ENCODE measurements at regions of chr6 and their contacts with region 1.

Region 1: GRCh38 chr6:13702809-13703302 is 8.8 kb downstream of the RANBP9 start:
- DNase-seq: peak in 2 of 4 experiments; percentile 45 to 63
- ATAC-seq: peak; percentile 78
- H3K4me3 ChIP-seq: no peak overlapping the region
- H3K27ac ChIP-seq: peak overlapping the region; percentile 64
- H3K4me1 ChIP-seq: peaks cover 19 to 50% of the 10 kb centered on the region in 2 experiments; a peak in 4 of 5 replicates
- H3K27me3 ChIP-seq: no peaks in the 10 kb centered on the region
- CTCF ChIP-seq: no peak
- EP300 ChIP-seq: peak; percentile 52; the same call in 1 of the 2 replicates
- POLR2A ChIP-seq: no peak
- RAD21 ChIP-seq: 0 out of 4 replicates have a peak, but pooled peaks of 1 of the 2 experiments have one; percentile 2

Region 2: DNA sequence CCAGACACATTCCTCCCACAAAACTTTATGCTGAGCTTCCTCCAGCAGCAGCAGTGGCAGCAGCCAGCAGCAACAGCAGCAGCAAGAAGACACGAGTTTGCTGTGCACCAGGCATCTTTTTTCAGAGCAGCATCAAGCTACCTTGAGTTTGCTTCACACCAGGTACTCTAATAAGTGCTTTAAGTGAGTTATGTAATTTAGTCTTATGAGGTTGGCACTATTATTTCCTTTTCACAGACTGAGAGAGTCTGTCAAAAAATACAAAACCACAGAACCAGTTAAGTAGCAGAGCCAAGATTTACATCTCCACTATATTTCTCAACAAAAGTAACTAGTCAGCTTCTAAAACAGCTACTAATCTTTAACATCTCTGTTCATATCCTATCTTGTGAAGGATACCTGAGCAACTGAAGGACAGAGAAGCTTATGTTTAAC is 14.9 kb before region 1 on chr6:
- CTCF ChIA-PET with region 1: no interaction called
- POLR2A ChIA-PET with region 1: interaction called, 15 read pairs
- in situ Hi-C with region 1: no loop called
- intact Hi-C with region 1: no loop called
- DNase-seq: no peak
- ATAC-seq: peak; percentile 5; the same call in 1 of the 3 replicates
- H3K4me3 ChIP-seq: no peak overlapping the region
- H3K27ac ChIP-seq: peak overlapping the region; percentile 19; the same call in 1 of the 3 replicates
- H3K4me1 ChIP-seq: peaks cover 10 to 32% of the 10 kb centered on the region in 2 experiments; a peak in 4 of 5 replicates
- H3K27me3 ChIP-seq: no peaks in the 10 kb centered on the region
- CTCF ChIP-seq: no peak
- EP300 ChIP-seq: no peak
- POLR2A ChIP-seq: no peak
- RAD21 ChIP-seq: no peak

Region 3: DNA sequence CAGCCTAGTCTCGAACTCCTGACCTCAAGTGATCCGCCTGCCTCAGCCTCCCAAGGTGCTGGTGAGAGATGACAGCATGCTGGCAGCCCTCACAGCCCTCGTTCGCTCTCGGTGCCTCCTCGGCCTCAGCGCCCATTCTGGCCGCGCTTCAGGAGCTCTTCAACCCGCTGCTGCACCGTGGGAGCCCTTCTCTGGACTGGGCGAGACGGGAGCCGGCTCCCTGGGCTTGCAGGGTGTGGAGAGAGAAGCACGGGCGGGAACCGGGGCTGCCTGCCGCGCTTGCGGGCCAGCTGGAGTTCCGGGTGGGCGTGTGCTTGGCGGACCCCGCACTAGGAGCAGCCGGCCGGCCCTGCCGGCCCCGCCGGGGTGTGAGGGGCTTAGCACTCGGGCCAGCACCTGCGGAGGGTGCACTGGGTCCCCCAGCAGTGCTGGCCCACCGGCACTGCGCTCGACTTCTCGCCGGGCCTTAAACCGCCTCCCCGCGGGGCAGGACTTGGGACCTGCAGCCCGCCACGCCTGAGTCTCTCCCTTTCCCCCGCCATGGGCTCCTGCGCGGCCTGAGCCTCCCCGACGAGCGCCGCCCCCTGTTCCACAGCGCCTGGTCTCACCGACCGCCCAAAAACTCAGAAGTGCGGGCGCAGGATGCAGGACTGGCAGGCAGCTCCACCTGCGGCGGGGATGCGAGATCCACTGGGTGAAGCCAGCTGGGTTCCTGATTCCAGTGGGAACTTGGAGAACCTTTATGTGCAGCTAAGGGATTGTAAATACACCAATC is 40.3 kb after region 1 on chr6:
- CTCF ChIA-PET with region 1: no interaction called
- POLR2A ChIA-PET with region 1: no interaction called
- in situ Hi-C with region 1: no loop called
- intact Hi-C with region 1: no loop called
- DNase-seq: no peak
- ATAC-seq: no peak
- H3K4me3 ChIP-seq: no peak overlapping the region
- H3K27ac ChIP-seq: no peak overlapping the region
- H3K4me1 ChIP-seq: peaks cover 0 to 5% of the 10 kb centered on the region in 2 experiments; a peak in 1 of 5 replicates
- H3K27me3 ChIP-seq: no peaks in the 10 kb centered on the region
- CTCF ChIP-seq: no peak
- EP300 ChIP-seq: no peak
- POLR2A ChIP-seq: no peak
- RAD21 ChIP-seq: no peak

Region 4: GRCh38 chr6:13754644-13755043 is 51.8 kb after region 1 on chr6:
- CTCF ChIA-PET with region 1: no interaction called
- POLR2A ChIA-PET with region 1: no interaction called
- in situ Hi-C with region 1: no loop called
- intact Hi-C with region 1: no loop called
- DNase-seq: no peak
- ATAC-seq: no peak
- H3K4me3 ChIP-seq: no peak overlapping the region
- H3K27ac ChIP-seq: no peak overlapping the region
- H3K4me1 ChIP-seq: no peaks in the 10 kb centered on the region
- H3K27me3 ChIP-seq: no peaks in the 10 kb centered on the region
- CTCF ChIP-seq: no peak
- EP300 ChIP-seq: no peak
- POLR2A ChIP-seq: no peak
- RAD21 ChIP-seq: no peak